MCF 10A (cell line): ENCODE measurements at regions of chr17 and their contacts with region 1.

Region 1: GRCh38 chr17:27236717-27237315 is 57.1 kb upstream of the WSB1 start:
- DNase-seq: peak; percentile 77
- H3K4me3 Mint-ChIP-seq: no peak overlapping the region
- H3K27ac Mint-ChIP-seq: no peak overlapping the region
- H3K4me1 Mint-ChIP-seq: peaks cover 8% of the 10 kb centered on the region
- H3K27me3 Mint-ChIP-seq: no peaks in the 10 kb centered on the region
- CTCF ChIP-seq: peak; percentile 93

Region 2: DNA sequence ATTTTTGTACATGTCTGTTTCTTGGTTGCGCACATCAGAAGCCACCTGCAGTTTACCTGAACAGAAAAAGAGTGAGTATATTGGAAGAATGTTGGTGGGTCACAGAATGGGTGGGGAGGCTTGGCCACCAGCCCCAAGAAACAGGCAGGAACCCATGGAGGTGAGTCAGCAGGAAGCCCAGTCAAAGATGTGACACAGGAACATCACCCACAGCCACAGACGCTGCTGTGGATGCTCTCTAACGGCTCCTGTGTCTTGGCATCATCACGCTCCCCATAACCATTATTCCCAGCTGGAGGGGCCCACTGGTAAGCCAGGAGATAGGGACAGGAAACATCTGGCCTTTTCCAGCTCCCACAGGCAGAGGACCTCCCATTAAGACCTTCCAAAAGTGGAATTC is 36.9 kb before region 1 on chr17:
- CTCF ChIA-PET with region 1: interaction called, 12 read pairs
- POLR2A ChIA-PET with region 1: interaction called, 5 read pairs
- intact Hi-C with region 1: no loop called
- DNase-seq: no peak
- H3K4me3 Mint-ChIP-seq: no peak overlapping the region
- H3K27ac Mint-ChIP-seq: no peak overlapping the region
- H3K4me1 Mint-ChIP-seq: no peaks in the 10 kb centered on the region
- H3K27me3 Mint-ChIP-seq: no peaks in the 10 kb centered on the region
- CTCF ChIP-seq: no peak

Region 3: GRCh38 chr17:27226615-27227230 is 10.1 kb before region 1 on chr17:
- CTCF ChIA-PET with region 1: interaction called, 16 read pairs
- POLR2A ChIA-PET with region 1: interaction called, 3 read pairs
- intact Hi-C with region 1: no loop called
- DNase-seq: peak; percentile 73
- H3K4me3 Mint-ChIP-seq: no peak overlapping the region
- H3K27ac Mint-ChIP-seq: peak overlapping the region; percentile 57
- H3K4me1 Mint-ChIP-seq: no peaks in the 10 kb centered on the region
- H3K27me3 Mint-ChIP-seq: no peaks in the 10 kb centered on the region
- CTCF ChIP-seq: no peak

Region 4: GRCh38 chr17:27256225-27257030 is 19.6 kb after region 1 on chr17:
- CTCF ChIA-PET with region 1: no interaction called
- POLR2A ChIA-PET with region 1: no interaction called
- intact Hi-C with region 1: no loop called
- DNase-seq: peak; percentile 54
- H3K4me3 Mint-ChIP-seq: no peak overlapping the region
- H3K27ac Mint-ChIP-seq: no peak overlapping the region
- H3K4me1 Mint-ChIP-seq: peaks cover 8% of the 10 kb centered on the region
- H3K27me3 Mint-ChIP-seq: no peaks in the 10 kb centered on the region
- CTCF ChIP-seq: no peak

Region 5: GRCh38 chr17:27306276-27306835 is 69.5 kb after region 1 on chr17:
- CTCF ChIA-PET with region 1: interaction called, 12 read pairs
- POLR2A ChIA-PET with region 1: interaction called, 3 read pairs
- intact Hi-C with region 1: no loop called
- DNase-seq: no peak
- H3K4me3 Mint-ChIP-seq: no peak overlapping the region
- H3K27ac Mint-ChIP-seq: no peak overlapping the region
- H3K4me1 Mint-ChIP-seq: peaks cover 14% of the 10 kb centered on the region
- H3K27me3 Mint-ChIP-seq: no peaks in the 10 kb centered on the region
- CTCF ChIP-seq: no peak

Region 6: DNA sequence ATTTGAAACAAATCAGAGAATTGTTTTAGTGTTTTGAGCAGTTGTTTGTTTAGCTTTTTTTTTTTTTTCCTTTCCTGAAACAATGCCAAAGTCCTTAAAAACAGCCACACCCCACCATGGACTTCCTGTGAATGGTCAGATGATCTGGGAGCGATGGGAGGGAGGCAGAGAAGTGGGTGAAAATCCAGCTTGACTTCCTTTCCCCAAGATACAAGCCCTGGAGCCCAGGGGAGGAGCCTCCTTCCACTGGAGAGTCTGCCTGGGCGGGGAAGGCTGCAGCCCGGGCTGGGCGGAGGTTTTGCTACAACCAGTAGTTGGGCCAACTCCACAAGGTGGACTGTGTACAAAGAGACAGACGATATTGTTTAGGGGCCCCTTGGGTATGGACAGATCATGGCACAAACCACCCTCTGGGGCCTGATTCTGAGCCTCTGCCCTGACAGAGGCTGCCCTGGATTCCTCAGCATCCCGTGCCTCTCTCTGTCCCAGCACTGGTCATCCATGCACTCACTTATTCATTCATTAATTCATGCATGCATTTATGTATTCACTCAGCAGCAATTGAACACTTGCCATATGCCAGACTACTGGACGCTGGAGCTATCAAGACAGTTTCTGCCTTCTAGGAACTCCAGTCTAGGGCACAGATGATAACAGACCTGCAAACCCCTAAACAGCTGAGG is 86.8 kb after region 1 on chr17:
- CTCF ChIA-PET with region 1: interaction called, 17 read pairs
- POLR2A ChIA-PET with region 1: interaction called, 6 read pairs
- intact Hi-C with region 1: no loop called
- DNase-seq: peak; percentile 52
- H3K4me3 Mint-ChIP-seq: no peak overlapping the region
- H3K27ac Mint-ChIP-seq: peak overlapping the region; percentile 75
- H3K4me1 Mint-ChIP-seq: peaks cover 29% of the 10 kb centered on the region
- H3K27me3 Mint-ChIP-seq: no peaks in the 10 kb centered on the region
- CTCF ChIP-seq: no peak

Region 7: GRCh38 chr17:27353461-27354050 is 116.7 kb after region 1 on chr17:
- CTCF ChIA-PET with region 1: interaction called, 26 read pairs
- POLR2A ChIA-PET with region 1: interaction called, 6 read pairs
- intact Hi-C with region 1: no loop called
- DNase-seq: peak; percentile 92
- H3K4me3 Mint-ChIP-seq: peak overlapping the region; percentile 85
- H3K27ac Mint-ChIP-seq: peak overlapping the region; percentile 97
- H3K4me1 Mint-ChIP-seq: peaks cover 19% of the 10 kb centered on the region
- H3K27me3 Mint-ChIP-seq: no peaks in the 10 kb centered on the region
- CTCF ChIP-seq: peak; percentile 95

Region 8: GRCh38 chr17:27390540-27390939 is 153.7 kb after region 1 on chr17:
- CTCF ChIA-PET with region 1: no interaction called
- POLR2A ChIA-PET with region 1: no interaction called
- intact Hi-C with region 1: no loop called
- DNase-seq: no peak
- H3K4me3 Mint-ChIP-seq: no peak overlapping the region
- H3K27ac Mint-ChIP-seq: no peak overlapping the region
- H3K4me1 Mint-ChIP-seq: no peaks in the 10 kb centered on the region
- H3K27me3 Mint-ChIP-seq: peaks cover 27% of the 10 kb centered on the region
- CTCF ChIP-seq: no peak

Region 9: GRCh38 chr17:27430882-27431491 is 194.2 kb after region 1 on chr17:
- CTCF ChIA-PET with region 1: interaction called, 9 read pairs
- POLR2A ChIA-PET with region 1: no interaction called
- intact Hi-C with region 1: loop called (anchors 2 kb)
- DNase-seq: peak; percentile 66
- H3K4me3 Mint-ChIP-seq: no peak overlapping the region
- H3K27ac Mint-ChIP-seq: no peak overlapping the region
- H3K4me1 Mint-ChIP-seq: no peaks in the 10 kb centered on the region
- H3K27me3 Mint-ChIP-seq: no peaks in the 10 kb centered on the region
- CTCF ChIP-seq: peak; percentile 60